Heart left ventricle (tissue), 16 donors: ENCODE measurements at regions of chr4 and their contacts with region 1.

Region 1: DNA sequence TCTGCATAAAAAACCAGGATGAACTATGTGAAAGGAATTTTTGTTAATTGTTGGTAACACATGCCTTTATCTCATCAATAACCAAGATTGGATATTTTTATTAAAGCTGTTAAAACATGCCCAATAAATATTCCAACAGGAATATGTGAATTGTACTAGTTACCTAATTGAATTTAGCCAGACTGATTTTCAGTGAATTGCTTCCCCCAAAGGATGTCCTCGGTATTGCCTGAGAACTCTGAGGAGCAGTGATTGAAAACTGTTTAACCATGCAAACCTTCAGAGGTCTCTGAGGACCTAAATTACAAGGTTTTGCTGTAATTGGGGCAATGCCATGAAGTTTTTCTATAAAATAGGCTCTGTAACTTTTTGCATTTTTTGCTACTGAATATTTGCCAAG is 66.6 kb downstream of the BLTP1 start:
- DNase-seq: no peak
- ATAC-seq: no peak
- H3K4me3 ChIP-seq: no peak overlapping the region
- H3K27ac ChIP-seq: no peak overlapping the region
- H3K4me1 ChIP-seq: no peaks in the 10 kb centered on the region
- H3K27me3 ChIP-seq: no peaks in the 10 kb centered on the region
- CTCF ChIP-seq: peak in 11 of 12 donors; percentile 20 to 46 (median 39)
- POLR2A ChIP-seq: no peak

Region 2: DNA sequence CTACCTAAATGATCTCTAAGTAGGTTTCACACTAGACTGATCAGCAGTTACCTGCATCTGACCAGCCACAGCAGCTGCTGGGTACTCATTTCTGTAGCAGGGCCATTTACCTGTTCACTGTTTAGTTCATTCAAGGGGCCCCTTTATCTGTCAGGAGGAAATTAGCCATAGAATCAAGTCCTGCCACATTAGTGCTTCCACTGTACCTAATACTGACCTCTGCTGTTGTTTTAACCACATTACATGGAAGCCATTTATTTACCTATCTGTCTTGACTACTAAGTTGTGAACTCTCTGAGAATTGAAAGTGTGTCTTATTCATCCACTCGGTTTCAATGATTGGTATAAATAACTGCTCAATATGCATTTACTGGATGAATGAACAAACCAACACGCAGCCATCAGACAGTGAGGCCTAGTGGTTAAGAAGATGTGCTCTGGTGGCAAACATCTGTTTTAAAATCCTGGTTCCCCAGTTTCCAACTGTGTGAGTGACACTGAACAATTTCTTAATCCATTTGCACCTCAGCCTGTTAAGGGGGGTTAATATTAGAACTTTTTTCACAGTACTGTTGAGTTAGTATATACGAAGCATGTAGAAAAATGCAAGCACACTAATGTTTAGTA is 492.0 kb before region 1 on chr4:
- intact Hi-C with region 1: no loop called
- DNase-seq: no peak
- ATAC-seq: peak in 3 of 4 donors; percentile 74 to 86 (median 75)
- H3K4me3 ChIP-seq: no peak overlapping the region
- H3K27ac ChIP-seq: no peak overlapping the region
- H3K4me1 ChIP-seq: peaks cover 0 to 3% (median 0%) of the 10 kb centered on the region in 12 donors
- H3K27me3 ChIP-seq: no peaks in the 10 kb centered on the region
- CTCF ChIP-seq: peak; percentile 60 to 79 (median 71)
- POLR2A ChIP-seq: no peak

Region 3: DNA sequence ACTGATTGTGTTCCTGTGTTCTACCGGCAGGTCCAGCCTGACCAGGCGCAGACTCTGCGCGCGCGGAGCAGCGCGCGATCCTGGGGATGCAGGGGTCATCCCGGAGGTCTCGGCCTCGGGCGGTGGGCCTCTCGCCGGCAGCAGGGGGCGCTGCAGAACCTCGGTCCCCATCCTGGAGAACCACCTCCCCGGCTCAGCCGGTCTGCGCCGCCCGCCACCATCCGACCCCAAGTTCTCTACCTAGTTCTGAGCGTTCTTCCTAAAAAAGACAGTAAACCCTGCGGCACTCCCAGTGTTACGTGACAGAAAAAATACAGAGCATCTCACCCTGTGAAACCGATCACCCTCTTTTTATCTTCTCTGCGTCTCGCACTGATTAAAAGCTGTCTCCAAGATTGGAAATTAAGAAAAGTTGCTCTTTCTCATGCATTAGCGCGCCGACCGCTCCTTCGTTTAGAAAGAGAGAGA is 268.5 kb before region 1 on chr4:
- intact Hi-C with region 1: loop called in 5 of 10 experiments (anchors 5 to 10 kb)
- DNase-seq: peak; percentile 74 to 87 (median 76)
- ATAC-seq: peak; percentile 77 to 96 (median 86)
- H3K4me3 ChIP-seq: peak overlapping the region; percentile 50 to 74 (median 63)
- H3K27ac ChIP-seq: peak overlapping the region in 1 of 12 donors; percentile 13
- H3K4me1 ChIP-seq: peaks cover 0 to 23% (median 7%) of the 10 kb centered on the region in 12 donors
- H3K27me3 ChIP-seq: peaks cover 0 to 47% (median 22%) of the 10 kb centered on the region in 9 donors
- CTCF ChIP-seq: peak; percentile 58 to 86 (median 73)
- POLR2A ChIP-seq: no peak